Sigmoid colon (tissue), 7 donors: ENCODE measurements at regions of chr7 and their contacts with region 1.

Region 1: GRCh38 chr7:27586825-27587224 is 75.9 kb downstream of the HIBADH start:
- DNase-seq: no peak
- H3K4me3 ChIP-seq: no peak overlapping the region
- H3K27ac ChIP-seq: no peak overlapping the region
- H3K4me1 ChIP-seq: no peaks in the 10 kb centered on the region
- H3K27me3 ChIP-seq: no peaks in the 10 kb centered on the region
- CTCF ChIP-seq: no peak
- EP300 ChIP-seq: no peak
- POLR2A ChIP-seq: no peak

Region 2: DNA sequence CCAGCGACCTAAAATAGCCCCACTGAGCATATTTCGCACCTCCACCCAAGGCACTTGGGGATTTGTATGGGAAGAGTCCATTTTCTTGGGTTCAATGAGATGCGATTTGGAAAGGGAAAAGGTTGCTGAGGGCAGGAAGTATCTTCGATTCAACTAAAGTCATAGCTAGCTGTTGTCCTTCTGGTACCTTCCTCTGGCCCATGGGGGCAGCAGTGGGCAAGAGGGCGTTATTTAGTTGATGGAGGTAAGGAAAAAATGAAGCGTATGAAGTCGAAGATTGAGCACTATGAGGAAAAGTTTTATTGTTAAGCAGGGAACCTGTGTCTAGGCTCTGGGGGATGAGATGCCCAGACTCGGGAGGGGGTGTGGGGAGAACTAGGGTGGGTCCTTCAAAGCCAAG is 208.8 kb before region 1 on chr7:
- intact Hi-C with region 1: no loop called
- DNase-seq: no peak
- H3K4me3 ChIP-seq: no peak overlapping the region
- H3K27ac ChIP-seq: no peak overlapping the region
- H3K4me1 ChIP-seq: peaks cover 0 to 14% (median 11%) of the 10 kb centered on the region in 4 donors
- H3K27me3 ChIP-seq: no peaks in the 10 kb centered on the region
- CTCF ChIP-seq: no peak
- EP300 ChIP-seq: no peak
- POLR2A ChIP-seq: no peak

Region 3: DNA sequence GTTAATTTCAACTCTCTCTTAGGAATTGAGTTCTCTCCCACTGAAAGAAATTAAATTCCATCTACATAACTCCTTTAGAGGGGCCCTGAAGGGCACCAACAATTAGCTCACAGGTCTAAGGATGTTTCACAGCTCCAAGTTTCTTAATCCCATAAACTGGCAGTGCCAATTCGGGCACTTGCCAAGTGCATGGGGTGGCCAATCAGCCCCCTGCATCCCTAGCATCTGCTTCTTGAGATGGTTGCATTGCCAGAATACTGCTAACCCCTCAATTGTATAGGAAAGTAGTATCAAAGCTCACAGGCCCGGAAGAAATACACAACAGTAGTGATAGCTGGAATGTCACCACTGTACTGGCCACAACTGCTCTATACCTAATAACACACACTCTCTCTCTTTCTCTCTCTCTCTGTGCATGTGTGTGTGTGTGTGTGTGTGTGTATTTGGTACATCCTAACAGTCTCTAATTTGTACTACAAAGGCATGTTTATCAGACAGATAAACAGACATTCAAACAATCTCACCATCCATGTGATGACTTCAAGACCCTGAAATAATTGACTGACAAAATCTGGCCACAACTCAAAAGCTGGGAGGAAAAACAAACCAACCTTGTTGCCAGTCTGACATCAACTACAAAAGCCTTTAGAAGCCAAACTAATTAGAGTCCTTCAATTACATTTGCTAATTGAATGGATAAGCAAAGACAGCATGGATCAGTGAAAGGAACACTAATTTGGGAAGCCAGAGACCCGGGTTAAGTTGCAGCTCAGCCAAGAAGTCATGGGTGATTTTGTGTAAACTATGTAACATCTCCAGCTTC is 48.1 kb after region 1 on chr7:
- intact Hi-C with region 1: no loop called
- DNase-seq: no peak
- H3K4me3 ChIP-seq: no peak overlapping the region
- H3K27ac ChIP-seq: no peak overlapping the region
- H3K4me1 ChIP-seq: peaks cover 0 to 22% (median 11%) of the 10 kb centered on the region in 4 donors
- H3K27me3 ChIP-seq: no peaks in the 10 kb centered on the region
- CTCF ChIP-seq: no peak
- EP300 ChIP-seq: no peak
- POLR2A ChIP-seq: no peak

Region 4: GRCh38 chr7:27767374-27767773 is 180.5 kb after region 1 on chr7:
- intact Hi-C with region 1: no loop called
- DNase-seq: no peak
- H3K4me3 ChIP-seq: no peak overlapping the region
- H3K27ac ChIP-seq: no peak overlapping the region
- H3K4me1 ChIP-seq: peaks cover 0 to 7% (median 0%) of the 10 kb centered on the region in 4 donors
- H3K27me3 ChIP-seq: no peaks in the 10 kb centered on the region
- CTCF ChIP-seq: no peak
- EP300 ChIP-seq: no peak
- POLR2A ChIP-seq: no peak

Region 5: GRCh38 chr7:27873981-27874957 is 287.4 kb after region 1 on chr7:
- intact Hi-C with region 1: loop called (anchors 5 kb)
- DNase-seq: no peak
- H3K4me3 ChIP-seq: no peak overlapping the region
- H3K27ac ChIP-seq: peak overlapping the region in 1 of 4 donors; percentile 1
- H3K4me1 ChIP-seq: peaks cover 0 to 36% (median 34%) of the 10 kb centered on the region in 4 donors
- H3K27me3 ChIP-seq: no peaks in the 10 kb centered on the region
- CTCF ChIP-seq: no peak
- EP300 ChIP-seq: no peak
- POLR2A ChIP-seq: no peak